BJ (cell line): ENCODE measurements at regions of chr19 and their contacts with region 1.

Region 1: DNA sequence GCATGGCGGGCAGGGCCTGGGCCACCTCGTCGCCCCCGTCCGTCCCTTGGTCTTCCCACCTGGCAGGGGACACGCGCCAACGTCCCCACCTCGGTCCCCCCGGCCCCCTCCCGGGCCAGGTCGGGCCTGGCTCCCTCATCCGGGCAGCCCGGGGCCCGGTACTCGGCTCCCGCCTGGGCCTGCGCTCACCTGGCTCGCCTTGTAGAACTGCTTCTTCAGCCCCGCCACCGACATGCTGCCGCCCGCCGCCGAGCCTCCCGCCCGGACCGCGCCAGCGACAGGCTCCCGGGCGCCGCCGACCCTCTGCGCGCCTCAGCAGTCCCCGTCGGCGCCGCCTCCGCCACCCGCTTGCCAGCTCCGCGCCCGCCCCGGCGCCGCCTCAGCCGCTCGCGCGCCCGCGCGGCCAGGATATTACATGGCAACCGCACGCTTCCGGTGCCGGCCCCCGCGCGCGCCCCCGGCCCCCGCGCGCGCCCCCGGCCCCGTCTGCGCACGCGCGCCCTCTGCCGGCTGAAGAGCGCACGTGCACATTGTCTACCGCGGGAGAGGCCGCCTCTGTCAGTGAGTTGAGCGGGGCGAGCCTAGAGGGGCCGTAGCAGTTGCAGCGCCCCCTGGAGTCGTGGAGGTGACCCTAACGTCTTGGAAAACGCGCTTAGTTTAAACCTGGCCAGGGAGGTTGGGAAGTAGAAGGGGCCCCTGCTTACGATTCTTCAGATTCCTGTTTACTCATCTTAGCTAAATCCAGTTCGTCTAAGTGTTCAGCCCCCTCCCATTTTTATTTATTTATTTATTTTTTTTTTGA is at the start of gene SH3GL1:
- DNase-seq: no peak
- H3K4me3 ChIP-seq: peak within 1 kb of the TSS; percentile 90
- H3K27me3 ChIP-seq: no peaks in the 10 kb centered on the region
- CTCF ChIP-seq: peak; percentile 96
- polyA plus RNA-seq, gene SH3GL1: 52.2 and 89.4 TPM in 2 replicates

Region 2: DNA sequence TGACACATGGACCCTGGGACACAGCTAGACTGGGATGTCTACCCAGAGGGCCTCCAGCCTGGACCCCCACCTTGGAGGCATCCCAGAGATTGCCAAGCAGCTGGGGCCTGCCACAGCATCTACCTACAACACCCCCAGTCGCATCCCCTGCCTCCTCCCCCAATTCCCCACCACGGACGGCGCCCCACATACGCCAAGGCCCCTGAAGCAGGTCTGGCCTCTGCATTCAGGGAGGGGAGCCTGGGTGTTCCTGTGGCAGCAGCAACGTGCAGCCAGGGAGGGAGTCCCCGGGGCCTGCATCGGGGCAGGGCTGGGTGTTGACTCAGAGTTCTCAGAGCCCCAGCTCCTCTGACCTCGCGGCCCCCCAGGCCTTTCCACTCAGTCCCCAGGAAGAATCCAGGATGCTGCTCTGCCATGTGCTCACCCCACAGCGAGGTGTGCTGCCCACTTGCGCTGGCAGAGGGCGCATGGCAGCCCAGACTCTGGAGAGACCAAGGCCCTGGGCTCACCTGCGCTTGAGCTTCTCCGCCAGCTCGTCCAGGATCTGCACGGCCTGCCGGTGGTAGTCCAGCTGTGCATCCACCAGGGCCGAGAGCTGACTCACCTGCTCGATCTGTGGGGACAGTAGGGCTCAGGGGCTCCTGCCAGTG is 37.4 kb before region 1 on chr19:
- CTCF ChIA-PET with region 1: interaction called, 10 read pairs
- POLR2A ChIA-PET with region 1: no interaction called
- DNase-seq: no peak
- H3K4me3 ChIP-seq: no peak overlapping the region
- H3K27me3 ChIP-seq: no peaks in the 10 kb centered on the region
- CTCF ChIP-seq: peak; percentile 19

Region 3: DNA sequence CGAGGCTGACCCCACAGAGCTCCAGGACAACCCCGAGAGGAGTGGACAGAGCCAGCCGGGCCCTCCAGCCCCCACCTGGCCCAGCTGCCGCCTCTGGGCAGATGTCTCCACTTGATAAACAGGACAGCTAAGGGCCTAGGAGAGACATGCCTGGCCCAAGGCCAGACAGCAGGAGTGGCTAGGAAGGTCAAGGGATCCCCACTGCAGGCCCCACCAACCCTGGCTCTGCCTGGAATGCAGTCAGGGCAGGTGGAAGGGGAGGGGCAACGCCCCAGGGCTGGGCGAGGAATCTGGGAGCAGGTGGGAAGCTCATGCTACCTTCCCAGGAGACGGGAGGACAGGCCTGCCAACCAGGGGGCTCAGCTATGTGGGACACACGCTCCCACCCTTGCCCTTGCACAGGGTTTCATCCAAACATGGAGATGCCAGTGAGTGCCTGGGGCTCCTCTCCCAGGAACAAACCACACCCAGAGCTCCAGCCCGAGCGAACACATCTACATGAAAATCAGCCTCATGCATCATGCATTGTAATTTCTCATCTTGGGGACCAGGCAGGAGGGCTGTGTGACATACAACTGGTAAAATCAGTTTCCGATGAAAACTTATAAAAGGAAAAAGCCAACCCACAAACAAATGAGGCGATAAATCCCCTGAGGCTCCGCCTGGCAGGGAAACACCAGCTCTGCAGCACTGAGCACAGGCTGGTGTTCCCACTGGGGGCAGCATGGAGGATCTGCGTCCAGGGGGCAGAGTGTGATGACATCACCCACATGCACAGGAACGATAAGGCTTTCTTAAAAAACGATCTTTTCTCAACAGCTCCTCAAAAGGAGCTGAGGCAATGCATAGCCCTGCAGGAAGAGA is 24.9 kb before region 1 on chr19:
- CTCF ChIA-PET with region 1: interaction called, 33 read pairs
- POLR2A ChIA-PET with region 1: no interaction called
- DNase-seq: no peak
- H3K4me3 ChIP-seq: no peak overlapping the region
- H3K27me3 ChIP-seq: no peaks in the 10 kb centered on the region
- CTCF ChIP-seq: peak; percentile 56

Region 4: GRCh38 chr19:4415352-4415751 is 15.0 kb after region 1 on chr19:
- CTCF ChIA-PET with region 1: interaction called, 17 read pairs
- POLR2A ChIA-PET with region 1: no interaction called
- DNase-seq: no peak
- H3K4me3 ChIP-seq: no peak overlapping the region
- H3K27me3 ChIP-seq: no peaks in the 10 kb centered on the region
- CTCF ChIP-seq: no peak